Activated CD4-positive, alpha-beta T cell treated with anti-CD3 and anti-CD28 coated beads for 36 hours (primary cell): ENCODE measurements at regions of chr5 and their contacts with region 1.

Region 1: GRCh38 chr5:32312647-32313523 is at the start of gene MTMR12:
- DNase-seq: peak; percentile 100
- ATAC-seq: peak; percentile 97
- H3K4me3 Mint-ChIP-seq: peak within 1 kb of the TSS; percentile 87
- H3K27ac Mint-ChIP-seq: peak within 1 kb of the TSS; percentile 86
- H3K4me1 Mint-ChIP-seq: peaks cover 30% of the 10 kb centered on the region
- H3K27me3 Mint-ChIP-seq: no peaks in the 10 kb centered on the region
- total RNA-seq, gene MTMR12: 21.6 to 22.8 TPM

Region 2: GRCh38 chr5:31531888-31532710 is 780.8 kb before region 1 on chr5 and contains the starts of genes C5orf22 and DROSHA:
- CTCF ChIA-PET with region 1: no interaction called
- POLR2A ChIA-PET with region 1: no interaction called
- intact Hi-C with region 1: loop called in 1 of 2 experiments (anchors 2 kb)
- DNase-seq: peak; percentile 96
- ATAC-seq: peak; percentile 97
- H3K4me3 Mint-ChIP-seq: peak within 1 kb of the TSS; percentile 82
- H3K27ac Mint-ChIP-seq: peak within 1 kb of the TSS; percentile 80
- H3K4me1 Mint-ChIP-seq: peaks cover 39% of the 10 kb centered on the region
- H3K27me3 Mint-ChIP-seq: no peaks in the 10 kb centered on the region
- total RNA-seq, gene C5orf22: 25.2 to 30.6 TPM
- total RNA-seq, gene DROSHA: 84.3 to 94.4 TPM

Region 3: DNA sequence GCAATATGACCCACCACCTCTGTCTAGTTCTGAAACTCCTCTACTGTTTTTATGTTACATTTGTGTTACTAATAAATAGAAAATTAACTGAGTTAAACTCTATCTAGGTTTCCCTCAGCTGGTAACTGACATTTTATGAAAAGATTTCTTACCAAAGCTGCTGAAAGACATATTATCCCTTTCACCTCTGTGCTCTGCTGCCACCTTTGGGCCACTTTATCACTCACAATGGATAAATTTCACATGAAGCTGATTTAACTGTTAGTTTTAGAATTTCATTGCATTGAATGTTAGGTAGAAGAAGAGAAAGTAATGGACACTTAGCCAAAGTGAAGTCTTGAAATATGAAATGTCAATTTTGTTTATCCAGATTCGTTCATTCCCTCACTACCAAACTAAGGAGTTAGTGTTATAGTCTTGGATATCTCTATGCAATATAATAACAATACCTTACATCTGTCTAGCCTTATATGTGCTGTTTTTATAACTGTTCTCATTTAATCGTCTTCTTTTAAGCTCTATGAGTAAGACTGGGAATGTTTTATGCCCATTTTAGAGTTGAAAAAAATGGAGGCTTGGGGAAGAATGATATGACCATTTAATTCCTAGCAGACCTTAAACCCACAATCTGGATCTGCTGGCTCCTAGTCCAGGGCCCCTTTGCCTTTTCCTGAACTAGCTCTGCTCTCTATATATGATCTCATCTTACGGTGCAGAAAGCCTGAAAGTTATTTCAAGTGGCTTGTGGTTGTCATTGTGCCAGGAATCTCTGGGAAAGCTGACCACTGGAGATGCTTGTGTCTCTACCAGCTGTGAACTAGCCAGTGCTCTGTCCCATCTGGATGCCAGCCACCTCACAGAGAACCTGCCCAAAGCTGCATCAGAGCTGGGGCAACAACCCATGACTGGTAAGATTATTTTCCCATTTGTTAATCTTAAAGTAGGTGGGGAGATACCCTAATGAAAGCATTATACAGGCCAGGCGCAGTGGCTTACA is 235.9 kb before region 1 on chr5:
- CTCF ChIA-PET with region 1: no interaction called
- POLR2A ChIA-PET with region 1: no interaction called
- intact Hi-C with region 1: no loop called
- DNase-seq: peak; percentile 71
- ATAC-seq: peak; percentile 49
- H3K4me3 Mint-ChIP-seq: no peak overlapping the region
- H3K27ac Mint-ChIP-seq: no peak overlapping the region
- H3K4me1 Mint-ChIP-seq: no peaks in the 10 kb centered on the region
- H3K27me3 Mint-ChIP-seq: no peaks in the 10 kb centered on the region

Region 4: GRCh38 chr5:32232441-32233219 is 80.3 kb before region 1 on chr5:
- CTCF ChIA-PET with region 1: interaction called, 3 read pairs
- POLR2A ChIA-PET with region 1: no interaction called
- intact Hi-C with region 1: loop called in 1 of 2 experiments (anchors 1 kb)
- DNase-seq: peak; percentile 90
- ATAC-seq: peak; percentile 95
- H3K4me3 Mint-ChIP-seq: no peak overlapping the region
- H3K27ac Mint-ChIP-seq: peak overlapping the region; percentile 56
- H3K4me1 Mint-ChIP-seq: no peaks in the 10 kb centered on the region
- H3K27me3 Mint-ChIP-seq: no peaks in the 10 kb centered on the region

Region 5: DNA sequence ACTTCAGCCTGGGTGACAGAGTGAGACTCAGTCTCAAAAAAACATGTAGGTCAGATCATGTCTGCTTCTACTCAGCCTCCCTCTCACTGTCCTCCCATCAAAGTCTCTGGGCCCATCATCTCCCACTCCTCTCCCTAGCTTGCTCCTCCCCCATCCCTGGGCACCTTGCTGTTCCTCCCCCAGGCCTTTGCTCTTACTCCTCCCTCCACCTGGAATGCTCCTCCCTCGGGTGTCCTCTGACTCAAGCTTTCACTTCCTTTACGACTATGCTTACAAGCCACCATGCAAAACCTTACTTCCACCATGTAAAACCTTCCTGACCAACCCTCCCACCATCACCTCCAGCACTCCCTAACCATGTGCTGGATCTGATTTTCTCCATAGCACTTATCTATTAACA is 51.7 kb before region 1 on chr5:
- CTCF ChIA-PET with region 1: no interaction called
- POLR2A ChIA-PET with region 1: no interaction called
- intact Hi-C with region 1: loop called in 1 of 2 experiments (anchors 1 kb)
- DNase-seq: peak; percentile 55
- ATAC-seq: peak; percentile 96
- H3K4me3 Mint-ChIP-seq: no peak overlapping the region
- H3K27ac Mint-ChIP-seq: peak overlapping the region; percentile 19
- H3K4me1 Mint-ChIP-seq: peaks cover 12% of the 10 kb centered on the region
- H3K27me3 Mint-ChIP-seq: no peaks in the 10 kb centered on the region

Region 6: DNA sequence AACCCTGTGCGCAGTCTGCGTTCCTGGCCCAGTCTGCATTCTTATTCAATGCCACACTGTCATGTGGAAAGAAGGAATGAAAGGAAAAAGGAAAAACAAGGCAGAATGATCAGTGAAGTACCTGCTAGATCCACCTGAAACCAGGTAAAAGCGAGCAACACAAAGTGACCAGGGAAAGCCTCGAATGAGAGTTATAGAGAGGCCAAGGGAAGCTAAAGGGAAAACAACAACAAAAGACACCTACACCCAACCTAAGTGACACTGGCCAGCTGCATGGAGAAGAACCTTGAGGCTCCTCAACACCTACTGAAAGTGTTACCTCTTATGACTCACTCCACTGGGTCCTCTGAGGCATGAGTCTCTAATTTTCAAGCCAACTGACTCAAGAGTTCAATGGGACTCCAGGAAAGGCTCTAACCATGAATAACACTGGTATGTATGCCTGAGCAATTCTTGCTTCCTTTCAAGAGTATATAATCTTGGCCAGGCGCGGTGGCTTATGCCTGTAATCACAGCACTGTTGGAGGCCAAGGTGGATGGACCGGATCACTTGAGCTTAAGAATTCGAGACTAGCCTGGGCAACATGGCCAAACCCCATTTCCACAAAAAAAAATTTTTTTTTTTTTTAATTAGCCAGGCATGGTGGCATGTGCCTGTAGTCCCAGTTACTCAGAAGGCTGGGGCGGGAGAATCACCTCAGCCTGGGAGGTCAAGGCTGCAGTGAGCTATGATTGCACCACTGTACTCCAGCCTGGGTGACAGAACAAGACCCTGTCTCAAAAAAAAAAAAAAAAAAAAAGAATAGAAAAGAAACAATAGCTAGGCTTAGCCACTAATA is 29.1 kb before region 1 on chr5:
- CTCF ChIA-PET with region 1: no interaction called
- POLR2A ChIA-PET with region 1: interaction called, 8 read pairs
- intact Hi-C with region 1: loop called (anchors 1 kb)
- DNase-seq: peak; percentile 48
- ATAC-seq: peak; percentile 77
- H3K4me3 Mint-ChIP-seq: no peak overlapping the region
- H3K27ac Mint-ChIP-seq: peak overlapping the region; percentile 8
- H3K4me1 Mint-ChIP-seq: peaks cover 53% of the 10 kb centered on the region
- H3K27me3 Mint-ChIP-seq: no peaks in the 10 kb centered on the region

Region 7: GRCh38 chr5:32444431-32445286 is 131.8 kb after region 1 on chr5 and contains the start of gene ZFR:
- CTCF ChIA-PET with region 1: no interaction called
- POLR2A ChIA-PET with region 1: no interaction called
- intact Hi-C with region 1: loop called (anchors 1 kb)
- DNase-seq: peak; percentile 97
- ATAC-seq: peak; percentile 90
- H3K4me3 Mint-ChIP-seq: peak within 1 kb of the TSS; percentile 99
- H3K27ac Mint-ChIP-seq: peak within 1 kb of the TSS; percentile 99
- H3K4me1 Mint-ChIP-seq: peaks cover 34% of the 10 kb centered on the region
- H3K27me3 Mint-ChIP-seq: no peaks in the 10 kb centered on the region
- total RNA-seq, gene ZFR: 60.6 to 81.4 TPM

Region 8: DNA sequence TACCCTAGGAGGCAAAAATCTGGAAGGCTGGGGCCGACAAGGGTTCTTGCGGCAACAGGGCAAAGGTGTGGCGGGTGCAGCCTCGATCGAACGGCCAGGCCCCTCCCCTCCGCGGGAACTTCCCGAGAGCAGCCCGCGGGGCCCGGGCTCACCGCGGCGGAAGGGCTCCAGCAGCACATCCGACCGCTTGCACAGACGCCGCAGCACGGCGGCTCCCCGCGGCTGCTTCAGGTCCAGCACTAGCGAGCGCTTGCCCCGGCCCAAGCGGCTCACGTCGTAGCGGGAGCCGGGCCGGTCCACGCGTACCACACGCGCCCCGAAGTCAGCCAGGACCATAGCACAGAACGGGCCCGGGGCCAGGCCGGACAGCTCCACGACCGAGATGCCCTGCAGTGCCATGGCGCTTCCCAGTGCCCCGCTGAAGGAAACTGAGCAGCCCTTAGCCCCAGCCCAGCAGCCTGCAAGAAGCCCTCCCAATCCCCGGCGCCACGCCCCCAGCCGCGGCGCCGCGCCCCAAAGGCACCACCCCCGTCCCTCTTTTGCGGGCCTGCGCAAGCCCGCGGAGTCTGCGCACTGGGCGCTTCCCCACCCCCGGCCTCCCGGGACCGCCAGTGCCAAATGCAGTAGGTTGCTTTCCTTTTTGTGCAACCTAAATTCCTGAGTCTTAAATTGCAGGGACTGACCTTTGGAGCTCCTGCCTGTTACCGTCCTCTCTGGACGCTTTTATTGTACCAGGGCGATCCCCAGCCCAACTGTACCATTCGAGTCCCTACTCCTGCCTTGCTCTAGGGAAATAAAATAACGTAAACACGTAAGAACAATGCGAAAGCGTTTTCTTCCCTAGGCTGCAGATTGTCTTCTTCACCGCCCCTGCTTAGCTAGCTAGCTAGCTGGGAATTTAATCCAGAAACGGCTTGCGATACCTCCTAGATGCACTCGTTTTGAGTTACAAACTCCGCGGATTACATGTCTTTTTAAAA is 1695.0 kb after region 1 on chr5 and contains the start of gene AMACR:
- CTCF ChIA-PET with region 1: no interaction called
- POLR2A ChIA-PET with region 1: no interaction called
- intact Hi-C with region 1: loop called in 1 of 2 experiments (anchors 5 kb)
- DNase-seq: peak; percentile 96
- ATAC-seq: peak; percentile 95
- H3K4me3 Mint-ChIP-seq: peak within 1 kb of the TSS; percentile 77
- H3K27ac Mint-ChIP-seq: peak within 1 kb of the TSS; percentile 90
- H3K4me1 Mint-ChIP-seq: peaks cover 32% of the 10 kb centered on the region
- H3K27me3 Mint-ChIP-seq: no peaks in the 10 kb centered on the region
- total RNA-seq, gene AMACR: 3.3 to 6.0 TPM